ENCODE measurements at regions of chr18 and their contacts with region 1.

Region 1: GRCh38 chr18:48777026-48777743 is 173.6 kb downstream of the SMAD7 start:
- DNase-seq: no peak
- ATAC-seq: peak; percentile 86
- H3K4me3 ChIP-seq: no peak overlapping the region
- H3K27ac ChIP-seq: peak overlapping the region; percentile 60
- H3K4me1 ChIP-seq: peaks cover 40% of the 10 kb centered on the region
- H3K27me3 ChIP-seq: no peaks in the 10 kb centered on the region
- CTCF ChIP-seq: peak; percentile 93 to 95 (median 94)
- EP300 ChIP-seq: no peak
- POLR2A ChIP-seq: no peak
- RAD21 ChIP-seq: peak; percentile 83

Region 2: GRCh38 chr18:48711651-48712486 is 65.3 kb before region 1 on chr18:
- CTCF ChIA-PET with region 1: interaction called, 29 read pairs
- POLR2A ChIA-PET with region 1: no interaction called
- RAD21 ChIA-PET with region 1: interaction called, 4 read pairs
- SMC1A ChIA-PET with region 1: interaction called, 17 read pairs
- in situ Hi-C with region 1: no loop called
- intact Hi-C with region 1: loop called (anchors 1 kb)
- DNase-seq: no peak
- ATAC-seq: peak; percentile 85
- H3K4me3 ChIP-seq: no peak overlapping the region
- H3K27ac ChIP-seq: no peak overlapping the region
- H3K4me1 ChIP-seq: peaks cover 11% of the 10 kb centered on the region
- H3K27me3 ChIP-seq: no peaks in the 10 kb centered on the region
- CTCF ChIP-seq: peak; percentile 59 to 81 (median 60)
- EP300 ChIP-seq: no peak
- POLR2A ChIP-seq: no peak
- RAD21 ChIP-seq: peak; percentile 83

Region 3: DNA sequence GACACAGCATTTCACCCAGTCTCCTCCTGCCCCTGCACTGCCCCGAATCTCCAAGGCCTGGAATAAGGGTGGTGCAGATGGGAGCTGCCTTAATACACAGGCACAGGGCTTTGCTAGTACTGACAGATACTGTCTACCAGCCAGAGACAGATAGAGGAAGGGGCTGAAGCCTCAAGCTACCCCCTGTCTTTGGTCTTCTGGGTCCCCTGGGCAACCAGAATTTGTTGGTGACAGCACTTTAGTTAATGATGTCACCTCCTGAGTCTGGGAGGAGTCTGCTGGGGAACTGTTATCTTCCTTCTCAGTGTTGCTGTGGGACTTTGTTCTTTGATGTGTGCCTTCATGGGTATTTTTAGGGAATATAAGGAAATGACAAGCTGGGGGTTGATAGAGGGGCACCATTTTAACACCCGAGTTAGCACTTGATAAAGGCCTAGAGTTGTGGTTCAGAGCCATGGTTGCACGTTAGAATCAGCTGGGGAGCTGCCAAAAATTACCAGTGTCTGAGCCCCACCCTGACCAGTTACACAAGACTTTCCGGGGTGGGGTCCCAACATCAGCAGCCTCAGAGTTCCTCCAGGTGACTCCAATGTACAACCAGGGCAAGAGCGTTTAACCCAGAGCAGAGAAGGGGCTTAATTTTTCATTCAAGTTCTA is 36.8 kb after region 1 on chr18:
- CTCF ChIA-PET with region 1: interaction called, 16 read pairs
- POLR2A ChIA-PET with region 1: interaction called, 7 read pairs
- RAD21 ChIA-PET with region 1: interaction called, 48 read pairs
- SMC1A ChIA-PET with region 1: interaction called, 54 read pairs
- in situ Hi-C with region 1: no loop called
- intact Hi-C with region 1: no loop called
- DNase-seq: no peak
- ATAC-seq: peak; percentile 70
- H3K4me3 ChIP-seq: no peak overlapping the region
- H3K27ac ChIP-seq: peak overlapping the region; percentile 81
- H3K4me1 ChIP-seq: peaks cover 33% of the 10 kb centered on the region
- H3K27me3 ChIP-seq: no peaks in the 10 kb centered on the region
- CTCF ChIP-seq: no peak
- EP300 ChIP-seq: no peak
- POLR2A ChIP-seq: no peak
- RAD21 ChIP-seq: no peak

Region 4: GRCh38 chr18:48851599-48851960 is 74.4 kb after region 1 on chr18:
- CTCF ChIA-PET with region 1: interaction called, 3 read pairs
- POLR2A ChIA-PET with region 1: interaction called, 10 read pairs
- RAD21 ChIA-PET with region 1: interaction called, 3 read pairs
- SMC1A ChIA-PET with region 1: interaction called, 3 read pairs
- in situ Hi-C with region 1: no loop called
- intact Hi-C with region 1: no loop called
- DNase-seq: no peak
- ATAC-seq: no peak
- H3K4me3 ChIP-seq: no peak overlapping the region
- H3K27ac ChIP-seq: no peak overlapping the region
- H3K4me1 ChIP-seq: peaks cover 2% of the 10 kb centered on the region; the same call in 1 of the 2 replicates
- H3K27me3 ChIP-seq: no peaks in the 10 kb centered on the region
- CTCF ChIP-seq: no peak
- EP300 ChIP-seq: no peak
- POLR2A ChIP-seq: no peak
- RAD21 ChIP-seq: no peak

Region 5: DNA sequence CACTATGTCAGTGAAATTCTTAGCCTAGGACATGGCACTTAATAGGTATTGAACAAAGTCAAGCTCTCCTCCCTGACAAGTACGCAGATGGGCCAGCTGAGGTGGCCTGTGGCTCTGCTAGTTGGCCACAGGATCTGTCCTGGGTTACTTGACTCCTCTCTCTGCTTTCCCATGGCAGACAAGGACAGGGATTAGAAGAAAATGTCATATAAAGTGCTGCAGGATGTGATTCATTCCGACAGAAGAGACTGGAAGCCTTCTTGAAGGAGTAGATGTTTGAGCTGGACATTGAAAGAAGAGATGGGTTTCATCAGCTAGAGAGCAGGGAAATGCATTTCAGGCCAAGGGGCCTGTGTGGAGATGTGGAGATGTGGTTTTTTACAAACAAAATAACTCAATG is 126.9 kb after region 1 on chr18:
- CTCF ChIA-PET with region 1: no interaction called
- POLR2A ChIA-PET with region 1: no interaction called
- RAD21 ChIA-PET with region 1: no interaction called
- SMC1A ChIA-PET with region 1: no interaction called
- in situ Hi-C with region 1: no loop called
- intact Hi-C with region 1: no loop called
- DNase-seq: no peak
- ATAC-seq: no peak
- H3K4me3 ChIP-seq: no peak overlapping the region
- H3K27ac ChIP-seq: no peak overlapping the region
- H3K4me1 ChIP-seq: no peaks in the 10 kb centered on the region
- H3K27me3 ChIP-seq: no peaks in the 10 kb centered on the region
- CTCF ChIP-seq: no peak
- EP300 ChIP-seq: no peak
- POLR2A ChIP-seq: no peak
- RAD21 ChIP-seq: no peak

Region 6: DNA sequence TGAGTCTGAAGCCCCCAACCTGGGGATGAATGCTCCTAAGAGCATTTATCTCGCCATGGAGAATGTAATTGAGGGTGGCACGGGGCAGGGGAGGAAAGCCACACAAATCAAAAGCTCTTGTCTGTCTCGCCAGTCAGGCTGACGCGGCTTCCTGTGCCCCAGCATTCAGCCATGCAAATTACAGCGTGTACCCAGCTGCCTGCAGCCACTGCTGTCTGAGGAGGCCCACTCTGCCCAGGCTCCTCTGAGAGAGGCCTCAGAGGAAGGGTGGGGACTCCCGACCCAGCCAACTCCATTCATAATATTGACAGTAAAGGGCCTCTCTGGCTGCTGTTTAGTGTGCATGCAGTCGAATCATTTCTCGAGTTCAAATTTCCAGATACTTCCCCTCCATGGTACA is 151.6 kb after region 1 on chr18:
- CTCF ChIA-PET with region 1: interaction called, 5 read pairs
- POLR2A ChIA-PET with region 1: interaction called, 7 read pairs
- RAD21 ChIA-PET with region 1: interaction called, 23 read pairs
- SMC1A ChIA-PET with region 1: interaction called, 21 read pairs
- in situ Hi-C with region 1: no loop called
- intact Hi-C with region 1: no loop called
- DNase-seq: peak; percentile 72
- ATAC-seq: peak; percentile 86
- H3K4me3 ChIP-seq: peak overlapping the region; percentile 11; the same call in 1 of the 2 replicates
- H3K27ac ChIP-seq: peak overlapping the region; percentile 49
- H3K4me1 ChIP-seq: peaks cover 72% of the 10 kb centered on the region
- H3K27me3 ChIP-seq: no peaks in the 10 kb centered on the region
- CTCF ChIP-seq: no peak
- EP300 ChIP-seq: no peak
- POLR2A ChIP-seq: peak; percentile 70
- RAD21 ChIP-seq: no peak

Region 7: DNA sequence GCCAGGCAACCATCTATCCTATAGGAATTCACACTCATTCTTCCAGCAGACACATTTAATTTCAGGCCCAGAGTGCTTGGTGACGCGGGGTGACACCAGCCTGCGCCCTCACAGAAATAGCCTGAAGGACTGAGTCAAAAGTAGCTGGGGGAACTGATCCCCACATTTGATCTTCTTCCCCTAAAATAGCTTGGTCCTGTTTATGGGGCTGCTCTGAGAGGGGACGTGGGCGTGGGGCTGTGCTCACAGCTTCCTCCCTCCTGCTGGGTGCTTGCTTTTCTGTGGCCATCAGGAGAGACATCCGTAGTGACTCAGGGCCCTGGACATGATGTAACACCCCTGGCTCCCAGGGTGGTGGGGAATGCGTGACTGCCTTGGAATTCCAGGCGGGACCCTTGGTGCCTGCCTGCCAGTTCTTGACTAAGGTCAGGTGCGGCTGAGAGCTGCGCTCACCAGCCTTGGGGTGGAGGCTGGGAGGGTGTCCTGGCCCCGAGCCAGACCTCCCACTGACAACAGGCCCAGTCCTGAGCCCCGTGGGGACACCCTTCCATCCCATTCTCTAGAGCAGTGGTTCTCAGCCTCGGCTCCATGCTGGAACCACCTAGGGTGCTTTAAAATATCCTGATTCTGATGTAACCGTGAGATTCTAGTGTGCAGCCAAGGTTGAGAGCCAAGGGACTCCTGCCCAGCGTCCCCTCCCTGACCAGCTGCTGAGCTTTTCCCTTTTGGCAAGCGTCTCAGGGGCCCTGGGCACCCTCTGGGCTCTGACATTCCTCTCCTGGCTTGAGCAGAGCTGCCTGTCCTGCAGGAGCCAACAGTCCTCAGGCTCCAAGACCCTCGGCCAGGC is 221.0 kb after region 1 on chr18:
- CTCF ChIA-PET with region 1: no interaction called
- POLR2A ChIA-PET with region 1: no interaction called
- RAD21 ChIA-PET with region 1: no interaction called
- SMC1A ChIA-PET with region 1: no interaction called
- in situ Hi-C with region 1: no loop called
- intact Hi-C with region 1: no loop called
- DNase-seq: no peak
- ATAC-seq: peak; percentile 36; the same call in 2 of the 3 replicates
- H3K4me3 ChIP-seq: no peak overlapping the region
- H3K27ac ChIP-seq: no peak overlapping the region
- H3K4me1 ChIP-seq: no peaks in the 10 kb centered on the region
- H3K27me3 ChIP-seq: no peaks in the 10 kb centered on the region; a peak in 2 of 4 replicates
- CTCF ChIP-seq: no peak
- EP300 ChIP-seq: no peak
- POLR2A ChIP-seq: no peak
- RAD21 ChIP-seq: no peak

Region 8: DNA sequence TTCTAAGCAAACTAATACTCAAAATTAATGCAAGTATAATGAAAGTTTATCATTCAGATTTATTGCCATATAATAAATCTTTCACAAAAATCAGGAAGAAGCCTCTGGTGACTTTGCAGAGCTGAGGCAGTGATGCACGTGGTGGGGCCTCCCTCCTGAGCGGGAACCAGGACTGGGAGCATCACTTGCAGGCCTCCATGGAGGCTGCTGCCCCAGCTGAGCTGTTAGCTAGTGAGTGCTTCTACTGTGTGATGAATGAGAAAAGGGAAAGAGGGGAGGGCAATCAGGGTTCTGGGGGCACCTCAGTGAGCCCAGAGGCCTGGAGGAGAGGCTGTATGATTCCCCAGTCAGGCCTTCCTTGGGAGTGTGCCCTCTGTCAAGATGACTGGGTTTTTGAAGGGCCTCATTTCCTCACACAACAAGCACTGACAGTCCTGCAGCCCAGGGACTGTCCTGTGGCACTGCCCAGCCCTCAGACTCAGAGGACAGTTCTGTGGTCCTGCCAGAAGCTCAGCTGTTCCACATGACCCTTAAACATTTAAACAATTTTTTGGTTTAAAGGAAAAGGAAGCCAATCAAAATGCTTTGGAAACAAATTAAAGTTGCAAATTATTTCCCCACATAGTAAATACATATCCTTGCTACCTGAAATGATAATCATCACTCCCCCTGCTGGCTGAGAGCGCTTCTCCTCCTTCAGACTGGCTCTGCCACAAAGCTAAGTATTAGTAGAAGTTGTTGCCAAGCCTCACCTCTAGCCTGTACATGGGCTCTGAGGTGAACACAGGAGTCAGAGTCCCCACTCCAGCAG is 264.5 kb after region 1 on chr18:
- CTCF ChIA-PET with region 1: interaction called, 39 read pairs
- POLR2A ChIA-PET with region 1: no interaction called
- RAD21 ChIA-PET with region 1: interaction called, 23 read pairs
- SMC1A ChIA-PET with region 1: interaction called, 29 read pairs
- in situ Hi-C with region 1: no loop called
- intact Hi-C with region 1: loop called (anchors 5 kb)
- DNase-seq: no peak
- ATAC-seq: peak; percentile 75
- H3K4me3 ChIP-seq: no peak overlapping the region
- H3K27ac ChIP-seq: no peak overlapping the region
- H3K4me1 ChIP-seq: no peaks in the 10 kb centered on the region
- H3K27me3 ChIP-seq: no peaks in the 10 kb centered on the region
- CTCF ChIP-seq: peak; percentile 49 to 56 (median 53); a peak in 5 of 6 replicates
- EP300 ChIP-seq: no peak
- POLR2A ChIP-seq: no peak
- RAD21 ChIP-seq: peak; percentile 51

Region 9: DNA sequence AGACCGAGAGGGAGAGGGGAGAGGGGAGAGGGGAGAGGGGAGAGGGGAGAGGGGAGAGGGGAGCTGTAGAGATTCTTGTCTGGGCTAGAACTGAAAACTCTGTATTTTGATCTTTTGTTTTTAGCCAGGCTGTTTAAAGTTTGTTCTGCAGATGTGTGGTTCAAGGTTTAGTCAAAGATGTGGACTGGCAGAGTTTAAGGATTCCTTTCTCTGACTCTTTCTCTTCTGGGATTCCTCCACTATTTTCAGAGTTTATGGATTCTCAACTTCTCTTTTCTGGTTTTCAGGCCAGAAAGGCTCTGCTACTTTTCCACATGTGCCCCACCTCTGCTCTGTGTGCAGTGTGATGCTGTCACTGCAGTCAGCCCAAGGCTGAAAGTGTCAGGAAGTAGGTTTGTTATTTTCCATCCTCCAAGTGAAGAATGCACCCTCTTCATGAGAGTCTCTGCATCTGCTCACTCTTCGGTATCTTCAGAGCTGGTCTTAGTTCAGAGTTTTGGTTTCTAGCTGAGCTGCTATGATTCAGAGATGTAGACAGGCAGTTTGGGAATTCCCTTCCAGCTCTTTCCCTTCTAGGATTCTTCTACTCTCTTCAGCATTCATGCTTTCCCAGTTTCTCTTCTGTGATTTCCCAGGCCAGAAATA is 304.4 kb after region 1 on chr18:
- CTCF ChIA-PET with region 1: no interaction called
- POLR2A ChIA-PET with region 1: no interaction called
- RAD21 ChIA-PET with region 1: no interaction called
- SMC1A ChIA-PET with region 1: no interaction called
- in situ Hi-C with region 1: no loop called
- intact Hi-C with region 1: no loop called
- DNase-seq: no peak
- ATAC-seq: no peak; the same call in 2 of the 3 replicates
- H3K4me3 ChIP-seq: no peak overlapping the region
- H3K27ac ChIP-seq: no peak overlapping the region
- H3K4me1 ChIP-seq: no peaks in the 10 kb centered on the region; the same call in 1 of the 2 replicates
- H3K27me3 ChIP-seq: no peaks in the 10 kb centered on the region
- CTCF ChIP-seq: no peak
- EP300 ChIP-seq: no peak
- POLR2A ChIP-seq: no peak
- RAD21 ChIP-seq: no peak